Activated B cell treated with CpG ODN at 0.5 μM for 24 hours (primary cell): ENCODE measurements at regions of chr12 and their contacts with region 1.

Region 1: GRCh38 chr12:46382964-46383653 is 10.5 kb upstream of the SLC38A2 start:
- DNase-seq: peak; percentile 92
- ATAC-seq: peak; percentile 69
- H3K4me3 Mint-ChIP-seq: peak overlapping the region; percentile 91
- H3K27ac Mint-ChIP-seq: peak overlapping the region; percentile 94
- H3K4me1 Mint-ChIP-seq: peaks cover 46% of the 10 kb centered on the region
- H3K27me3 Mint-ChIP-seq: no peaks in the 10 kb centered on the region
- CTCF ChIP-seq: no peak

Region 2: GRCh38 chr12:45042599-45042998 is 1340.5 kb before region 1 on chr12:
- CTCF ChIA-PET with region 1: no interaction called
- POLR2A ChIA-PET with region 1: no interaction called
- intact Hi-C with region 1: no loop called
- DNase-seq: no peak
- ATAC-seq: no peak
- H3K4me3 Mint-ChIP-seq: no peak overlapping the region
- H3K27ac Mint-ChIP-seq: no peak overlapping the region
- H3K4me1 Mint-ChIP-seq: no peaks in the 10 kb centered on the region
- H3K27me3 Mint-ChIP-seq: peaks cover 12% of the 10 kb centered on the region
- CTCF ChIP-seq: no peak

Region 3: DNA sequence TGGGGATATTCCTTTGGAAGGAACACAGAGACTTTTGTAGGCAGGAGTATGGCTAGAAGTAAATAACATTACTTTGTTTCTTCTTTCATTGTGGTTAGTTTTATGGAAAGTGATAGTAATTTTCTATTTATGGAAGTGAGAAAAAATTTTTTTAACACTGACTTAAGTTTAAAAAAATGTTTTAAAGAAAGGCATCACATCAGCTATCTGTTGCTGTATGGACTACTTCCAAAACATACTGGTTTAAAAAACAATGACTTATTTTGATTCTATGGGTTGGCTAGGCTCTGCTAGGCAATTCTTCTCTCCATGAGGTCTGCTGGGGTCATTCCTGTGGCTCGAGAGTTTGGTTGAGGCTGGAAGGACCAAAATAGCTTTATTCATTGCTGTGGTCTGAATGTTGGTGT is 21.1 kb after region 1 on chr12:
- CTCF ChIA-PET with region 1: no interaction called
- POLR2A ChIA-PET with region 1: interaction called, 11 read pairs
- intact Hi-C with region 1: no loop called
- DNase-seq: no peak
- ATAC-seq: no peak
- H3K4me3 Mint-ChIP-seq: no peak overlapping the region
- H3K27ac Mint-ChIP-seq: no peak overlapping the region
- H3K4me1 Mint-ChIP-seq: peaks cover 48% of the 10 kb centered on the region
- H3K27me3 Mint-ChIP-seq: no peaks in the 10 kb centered on the region
- CTCF ChIP-seq: no peak

Region 4: DNA sequence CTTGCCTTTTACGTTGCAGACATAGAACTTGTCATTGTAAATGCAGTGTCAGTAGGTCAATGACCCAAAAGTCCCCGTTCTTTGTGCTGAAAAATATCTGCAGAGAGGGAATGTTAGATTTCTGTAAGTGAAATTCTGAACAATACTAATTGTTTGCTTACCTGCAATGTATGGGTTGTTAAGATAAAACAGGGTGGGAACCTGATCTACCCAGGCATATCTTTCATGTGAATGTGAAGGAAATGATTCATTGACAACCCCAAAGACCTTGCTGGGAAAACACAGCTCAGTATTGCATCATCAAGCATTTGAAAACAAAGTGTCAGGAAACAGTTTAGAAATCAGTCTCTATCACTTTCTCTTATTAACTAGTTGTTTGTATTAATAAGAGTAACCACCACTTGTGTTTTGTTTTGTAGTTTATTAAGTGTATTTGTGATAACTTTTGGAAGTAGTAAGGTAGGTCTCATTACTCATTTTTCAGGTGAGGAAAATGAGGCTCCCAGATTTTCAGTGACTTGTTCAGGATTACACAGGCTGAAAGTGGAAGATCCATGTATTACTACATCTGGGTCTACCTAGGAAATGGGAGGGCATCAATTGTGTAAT is 47.3 kb after region 1 on chr12:
- CTCF ChIA-PET with region 1: no interaction called
- POLR2A ChIA-PET with region 1: interaction called, 5 read pairs
- intact Hi-C with region 1: loop called (anchors 10 kb)
- DNase-seq: no peak
- ATAC-seq: no peak
- H3K4me3 Mint-ChIP-seq: no peak overlapping the region
- H3K27ac Mint-ChIP-seq: peak overlapping the region; percentile 62
- H3K4me1 Mint-ChIP-seq: peaks cover 10% of the 10 kb centered on the region
- H3K27me3 Mint-ChIP-seq: no peaks in the 10 kb centered on the region
- CTCF ChIP-seq: no peak